HCT116 (cell line): ENCODE measurements at regions of chr12 and their contacts with region 1.

Region 1: GRCh38 chr12:57309420-57309819 is 58.4 kb upstream of the STAC3 start:
- DNase-seq: no peak
- ATAC-seq: no peak
- H3K4me3 ChIP-seq: no peak overlapping the region
- H3K27ac ChIP-seq: no peak overlapping the region
- H3K4me1 ChIP-seq: peaks cover 0 to 11% of the 10 kb centered on the region in 2 experiments; a peak in 2 of 4 replicates
- H3K27me3 ChIP-seq: no peaks in the 10 kb centered on the region
- CTCF ChIP-seq: no peak
- POLR2A ChIP-seq: no peak
- RAD21 ChIP-seq: no peak

Region 2: GRCh38 chr12:57319678-57320469 is 10.5 kb after region 1 on chr12:
- CTCF ChIA-PET with region 1: interaction called, 20 read pairs
- POLR2A ChIA-PET with region 1: no interaction called
- RAD21 ChIA-PET with region 1: no interaction called
- intact Hi-C with region 1: no loop called
- DNase-seq: no peak
- ATAC-seq: no peak
- H3K4me3 ChIP-seq: no peak overlapping the region
- H3K27ac ChIP-seq: no peak overlapping the region
- H3K4me1 ChIP-seq: peaks cover 0 to 8% of the 10 kb centered on the region in 2 experiments; a peak in 2 of 4 replicates
- H3K27me3 ChIP-seq: no peaks in the 10 kb centered on the region
- CTCF ChIP-seq: no peak
- POLR2A ChIP-seq: no peak
- RAD21 ChIP-seq: no peak

Region 3: DNA sequence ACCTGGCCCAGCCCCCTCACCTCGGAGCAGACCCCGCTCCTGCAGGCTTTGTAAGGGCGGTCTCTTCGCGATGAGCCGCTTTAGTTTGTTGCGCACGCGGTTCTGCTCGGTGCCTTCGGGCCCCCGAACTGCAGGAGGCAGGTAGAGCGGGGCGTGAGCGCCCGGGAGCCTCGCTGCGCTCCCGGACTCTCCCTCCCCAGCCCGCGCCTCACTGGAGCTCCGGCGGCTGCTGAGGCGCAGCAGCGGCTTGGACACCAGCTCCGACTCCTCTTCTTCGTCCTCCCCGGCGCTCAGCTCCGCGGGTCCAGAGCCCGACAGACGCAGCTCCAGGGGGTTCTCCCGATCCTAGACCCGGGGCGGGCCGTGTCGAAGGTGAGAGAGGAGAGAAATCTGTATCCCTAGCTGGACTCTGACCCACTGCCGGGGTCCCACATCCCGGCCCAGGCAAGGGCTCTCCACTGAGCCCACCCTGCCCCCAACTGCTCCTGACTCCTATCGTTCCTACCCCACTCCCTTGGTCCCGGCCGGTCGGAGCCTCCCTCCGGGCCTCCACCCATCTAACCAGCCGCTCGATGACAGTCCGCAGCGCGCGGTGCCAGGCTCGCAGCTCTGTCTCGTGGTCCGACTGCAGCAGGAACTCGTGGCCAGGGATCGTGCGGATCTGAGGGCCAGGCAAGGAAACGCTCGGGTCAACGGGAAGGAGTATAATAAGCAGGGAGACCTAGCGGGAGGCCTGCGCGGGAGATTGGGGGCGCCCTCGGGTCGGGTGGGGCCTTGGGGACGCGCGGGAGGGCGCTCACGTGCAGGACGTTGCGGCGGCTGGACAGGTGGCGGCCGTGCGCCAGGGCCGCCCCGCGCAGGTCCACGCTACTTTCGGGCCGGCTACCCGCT is 166.1 kb after region 1 on chr12:
- CTCF ChIA-PET with region 1: no interaction called
- POLR2A ChIA-PET with region 1: no interaction called
- RAD21 ChIA-PET with region 1: no interaction called
- intact Hi-C with region 1: no loop called
- DNase-seq: no peak
- ATAC-seq: no peak
- H3K4me3 ChIP-seq: no peak overlapping the region
- H3K27ac ChIP-seq: no peak overlapping the region
- H3K4me1 ChIP-seq: peaks cover 0 to 16% of the 10 kb centered on the region in 2 experiments; a peak in 2 of 4 replicates
- H3K27me3 ChIP-seq: peaks cover 19% of the 10 kb centered on the region; the same call in 1 of the 2 replicates
- CTCF ChIP-seq: no peak
- POLR2A ChIP-seq: no peak
- RAD21 ChIP-seq: no peak